ENCODE measurements at regions of chr13 and their contacts with region 1.

Region 1: GRCh38 chr13:26482451-26483197 is 74.9 kb upstream of the WASF3 start:
- DNase-seq: peak; percentile 78
- ATAC-seq: peak; percentile 89
- H3K4me3 ChIP-seq: peak overlapping the region in 3 of 5 experiments; percentile 25 to 46 (median 36)
- H3K4me3 Mint-ChIP-seq: peak overlapping the region; percentile 62
- H3K27ac ChIP-seq: no peak overlapping the region
- H3K27ac Mint-ChIP-seq: peak overlapping the region; percentile 72
- H3K4me1 ChIP-seq: peaks cover 0 to 5% of the 10 kb centered on the region in 2 donors
- H3K4me1 Mint-ChIP-seq: peaks cover 4% of the 10 kb centered on the region
- H3K27me3 ChIP-seq: no peaks in the 10 kb centered on the region
- H3K27me3 Mint-ChIP-seq: peaks cover 4% of the 10 kb centered on the region
- CTCF ChIP-seq: peak; percentile 82

Region 2: DNA sequence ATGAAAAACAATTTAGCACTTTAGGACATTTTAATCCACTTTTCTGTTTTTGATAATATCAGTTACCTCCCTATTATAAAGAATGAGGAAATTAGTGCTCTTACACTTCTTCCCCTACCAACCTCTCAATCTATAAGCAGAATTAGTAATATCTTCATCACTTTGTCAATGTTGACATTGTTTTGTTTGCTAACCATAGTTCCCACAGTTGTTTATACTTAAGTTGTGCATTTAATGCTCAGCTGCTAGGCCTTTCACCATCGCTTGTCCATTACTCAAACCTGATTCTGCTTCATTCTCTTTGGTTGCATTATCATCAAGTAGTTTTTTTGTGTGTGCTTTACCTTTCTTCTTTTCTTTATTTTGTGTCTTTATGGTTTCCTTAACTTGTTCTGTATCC is 96.6 kb before region 1 on chr13:
- CTCF ChIA-PET with region 1: no interaction called
- POLR2A ChIA-PET with region 1: no interaction called
- intact Hi-C with region 1: no loop called
- DNase-seq: no peak
- ATAC-seq: no peak
- H3K4me3 ChIP-seq: no peak overlapping the region
- H3K4me3 Mint-ChIP-seq: no peak overlapping the region
- H3K27ac ChIP-seq: no peak overlapping the region
- H3K27ac Mint-ChIP-seq: no peak overlapping the region
- H3K4me1 ChIP-seq: no peaks in the 10 kb centered on the region
- H3K4me1 Mint-ChIP-seq: no peaks in the 10 kb centered on the region
- H3K27me3 ChIP-seq: no peaks in the 10 kb centered on the region
- H3K27me3 Mint-ChIP-seq: no peaks in the 10 kb centered on the region
- CTCF ChIP-seq: no peak

Region 3: GRCh38 chr13:26498656-26499591 is 16.3 kb after region 1 on chr13:
- CTCF ChIA-PET with region 1: interaction called, 25 read pairs
- POLR2A ChIA-PET with region 1: no interaction called
- intact Hi-C with region 1: no loop called
- DNase-seq: no peak
- ATAC-seq: no peak
- H3K4me3 ChIP-seq: no peak overlapping the region
- H3K4me3 Mint-ChIP-seq: no peak overlapping the region
- H3K27ac ChIP-seq: no peak overlapping the region
- H3K27ac Mint-ChIP-seq: no peak overlapping the region
- H3K4me1 ChIP-seq: no peaks in the 10 kb centered on the region
- H3K4me1 Mint-ChIP-seq: no peaks in the 10 kb centered on the region
- H3K27me3 ChIP-seq: peaks cover 0 to 3% (median 1%) of the 10 kb centered on the region in 4 experiments
- H3K27me3 Mint-ChIP-seq: peaks cover 10% of the 10 kb centered on the region
- CTCF ChIP-seq: no peak

Region 4: DNA sequence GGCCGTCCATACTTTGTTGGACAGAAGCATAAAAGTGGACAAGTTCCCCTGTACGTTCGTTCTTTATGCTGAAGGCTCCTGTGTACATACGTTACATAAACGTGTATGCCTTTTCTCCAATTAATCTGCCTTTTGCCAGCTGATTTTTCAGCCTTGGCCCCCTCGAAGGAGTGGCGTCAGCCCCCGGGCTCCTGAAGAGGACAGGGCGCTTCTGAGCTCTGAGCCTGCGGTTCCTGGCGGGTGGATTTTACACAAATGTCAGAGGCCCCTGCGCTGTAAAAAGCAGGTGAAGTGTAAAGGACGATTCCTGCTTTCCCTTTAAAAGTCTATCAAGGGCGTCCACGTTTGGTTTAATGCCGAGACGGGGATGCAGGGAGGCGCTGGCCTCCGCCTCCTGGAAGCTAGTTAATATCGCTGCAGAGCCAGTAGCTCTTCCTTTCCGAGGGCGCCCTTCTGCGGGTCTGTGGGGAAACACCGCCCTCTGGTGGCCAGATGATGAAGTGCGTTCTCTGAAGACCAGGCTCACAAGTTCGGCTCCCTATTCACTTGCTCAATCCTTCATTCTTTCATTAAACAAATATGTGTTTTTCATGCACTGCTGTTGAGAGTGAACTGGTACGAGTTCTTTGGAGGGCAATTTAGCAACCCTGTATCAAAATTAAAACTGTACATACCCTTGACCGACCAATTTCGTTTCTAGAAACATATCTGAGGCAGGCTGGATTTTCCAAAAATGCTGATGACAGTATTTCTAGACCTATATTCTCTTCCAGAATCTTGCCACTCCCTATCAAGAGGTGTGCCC is 216.0 kb after region 1 on chr13:
- CTCF ChIA-PET with region 1: interaction called, 10 read pairs
- POLR2A ChIA-PET with region 1: no interaction called
- intact Hi-C with region 1: no loop called
- DNase-seq: peak; percentile 80
- ATAC-seq: peak; percentile 87
- H3K4me3 ChIP-seq: no peak overlapping the region
- H3K4me3 Mint-ChIP-seq: no peak overlapping the region
- H3K27ac ChIP-seq: no peak overlapping the region
- H3K27ac Mint-ChIP-seq: no peak overlapping the region
- H3K4me1 ChIP-seq: peaks cover 0 to 5% of the 10 kb centered on the region in 2 donors
- H3K4me1 Mint-ChIP-seq: peaks cover 6% of the 10 kb centered on the region
- H3K27me3 ChIP-seq: peaks cover 0 to 9% (median 0%) of the 10 kb centered on the region in 4 experiments
- H3K27me3 Mint-ChIP-seq: peaks cover 9% of the 10 kb centered on the region
- CTCF ChIP-seq: peak; percentile 97

Region 5: DNA sequence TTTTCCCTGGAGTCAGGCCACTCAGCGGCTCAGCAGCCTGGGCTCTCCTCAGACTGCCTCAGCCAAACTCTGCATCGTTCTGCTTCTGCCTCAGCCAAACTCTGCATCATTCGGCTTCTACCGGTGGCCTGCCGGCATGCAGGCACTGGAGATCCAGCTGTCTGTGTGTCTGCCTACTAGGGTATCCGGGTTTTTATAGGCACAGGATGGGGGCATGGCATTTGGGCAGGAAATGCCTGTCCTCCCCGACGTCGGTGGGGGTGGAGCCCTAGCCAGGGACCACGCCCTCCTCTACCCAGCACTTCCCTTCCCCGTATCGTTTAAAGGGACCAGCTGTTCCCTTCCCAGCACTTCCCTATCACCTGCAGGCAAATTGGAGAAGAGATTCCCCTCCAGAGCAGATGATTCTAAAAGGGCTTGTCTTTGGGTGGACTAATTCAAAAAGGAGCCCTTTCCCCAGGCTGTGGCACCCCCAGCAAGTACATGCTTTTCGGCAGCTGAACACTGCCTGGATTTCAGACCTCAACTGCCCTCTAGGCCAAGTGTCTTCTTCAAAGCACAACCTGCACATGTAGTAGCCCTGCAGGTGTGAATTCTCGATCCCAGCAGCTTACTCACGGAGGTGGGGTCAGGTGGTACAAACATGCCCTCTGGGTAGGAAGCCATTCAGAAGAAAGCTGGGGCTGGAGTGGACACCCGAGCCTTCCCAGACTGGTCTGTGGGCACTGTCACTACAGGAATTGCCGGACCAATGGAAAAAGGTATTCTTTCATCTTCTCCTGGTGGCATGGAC is 303.4 kb after region 1 on chr13:
- CTCF ChIA-PET with region 1: no interaction called
- POLR2A ChIA-PET with region 1: no interaction called
- intact Hi-C with region 1: loop called (anchors 10 kb)
- DNase-seq: peak; percentile 77
- ATAC-seq: peak; percentile 62
- H3K4me3 ChIP-seq: peak overlapping the region; percentile 51 to 77 (median 64)
- H3K4me3 Mint-ChIP-seq: peak overlapping the region; percentile 93
- H3K27ac ChIP-seq: peak overlapping the region; percentile 68 to 87
- H3K27ac Mint-ChIP-seq: peak overlapping the region; percentile 90
- H3K4me1 ChIP-seq: peaks cover 15 to 23% of the 10 kb centered on the region in 2 donors
- H3K4me1 Mint-ChIP-seq: peaks cover 23% of the 10 kb centered on the region
- H3K27me3 ChIP-seq: peaks cover 0 to 5% (median 3%) of the 10 kb centered on the region in 4 experiments
- H3K27me3 Mint-ChIP-seq: peaks cover 12% of the 10 kb centered on the region
- CTCF ChIP-seq: no peak

Region 6: GRCh38 chr13:26929971-26930730 is 447.5 kb after region 1 on chr13:
- CTCF ChIA-PET with region 1: no interaction called
- POLR2A ChIA-PET with region 1: no interaction called
- intact Hi-C with region 1: loop called (anchors 2 kb)
- DNase-seq: peak; percentile 70
- ATAC-seq: peak; percentile 56
- H3K4me3 ChIP-seq: no peak overlapping the region
- H3K4me3 Mint-ChIP-seq: no peak overlapping the region
- H3K27ac ChIP-seq: no peak overlapping the region
- H3K27ac Mint-ChIP-seq: no peak overlapping the region
- H3K4me1 ChIP-seq: peaks cover 3% of the 10 kb centered on the region in 2 donors
- H3K4me1 Mint-ChIP-seq: peaks cover 6% of the 10 kb centered on the region
- H3K27me3 ChIP-seq: peaks cover 0 to 9% (median under 1%) of the 10 kb centered on the region in 4 experiments
- H3K27me3 Mint-ChIP-seq: peaks cover 17% of the 10 kb centered on the region
- CTCF ChIP-seq: peak; percentile 100